Mammary epithelial cell (primary cell): ENCODE measurements at regions of chr1 and their contacts with region 1.

Region 1: DNA sequence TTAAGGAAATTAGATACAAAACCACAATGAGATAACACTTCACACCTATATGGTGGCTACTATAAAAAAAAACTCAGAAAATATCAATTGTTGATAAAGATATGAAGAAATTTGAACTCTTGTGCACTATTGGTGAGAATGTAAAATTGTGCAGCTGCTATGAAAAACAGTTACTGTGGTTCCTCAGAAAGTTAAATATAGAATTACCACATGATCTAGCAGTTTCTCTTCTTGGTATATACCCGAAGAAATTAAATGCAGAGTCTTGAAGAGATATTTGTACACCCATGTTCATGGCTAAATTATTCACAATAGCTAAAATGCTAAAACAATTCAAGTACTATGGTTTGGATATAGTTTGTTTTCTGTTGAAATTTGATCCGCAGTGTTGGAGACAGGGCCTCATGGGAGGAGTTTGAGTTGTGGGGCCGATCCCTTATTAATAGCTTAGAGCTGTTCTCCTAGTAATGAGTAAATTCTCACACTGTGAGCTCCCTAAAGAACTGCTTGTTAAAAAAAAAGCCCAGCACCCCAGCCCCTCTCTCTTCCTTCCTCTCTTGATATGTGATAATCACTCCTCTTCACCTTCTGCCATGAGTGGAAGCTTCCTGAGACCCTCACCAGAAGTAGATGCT is 1412.1 kb downstream of the PLA2G4A start:
- DNase-seq: no peak
- H3K4me3 ChIP-seq: no peak overlapping the region
- H3K27ac ChIP-seq: no peak overlapping the region
- H3K4me1 ChIP-seq: peaks cover 3% of the 10 kb centered on the region
- H3K27me3 ChIP-seq: no peaks in the 10 kb centered on the region
- CTCF ChIP-seq: no peak

Region 2: DNA sequence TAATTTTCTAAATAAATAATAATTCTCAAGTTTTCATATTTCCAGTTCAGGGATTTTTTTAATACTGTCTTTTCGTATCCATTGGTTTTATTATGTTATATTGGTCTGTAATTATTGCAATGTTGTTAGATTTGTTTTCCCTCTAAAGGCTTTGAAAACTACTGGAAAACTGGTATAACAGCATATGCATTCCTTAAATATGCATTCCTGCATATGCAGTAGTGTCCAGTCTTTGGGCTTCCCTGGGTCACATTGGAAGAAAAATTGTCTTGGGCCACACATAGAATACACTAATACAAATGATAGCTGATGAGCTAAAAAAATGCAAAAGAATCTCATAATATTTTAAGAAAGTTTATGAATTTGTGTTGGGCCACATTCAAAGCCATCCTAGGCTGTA is 160.2 kb before region 1 on chr1:
- CTCF ChIA-PET with region 1: no interaction called
- dilution Hi-C with region 1: no loop called
- in situ Hi-C with region 1: no loop called
- intact Hi-C with region 1: no loop called
- DNase-seq: no peak
- H3K4me3 ChIP-seq: no peak overlapping the region
- H3K27ac ChIP-seq: no peak overlapping the region
- H3K4me1 ChIP-seq: no peaks in the 10 kb centered on the region
- H3K27me3 ChIP-seq: no peaks in the 10 kb centered on the region
- CTCF ChIP-seq: no peak

Region 3: DNA sequence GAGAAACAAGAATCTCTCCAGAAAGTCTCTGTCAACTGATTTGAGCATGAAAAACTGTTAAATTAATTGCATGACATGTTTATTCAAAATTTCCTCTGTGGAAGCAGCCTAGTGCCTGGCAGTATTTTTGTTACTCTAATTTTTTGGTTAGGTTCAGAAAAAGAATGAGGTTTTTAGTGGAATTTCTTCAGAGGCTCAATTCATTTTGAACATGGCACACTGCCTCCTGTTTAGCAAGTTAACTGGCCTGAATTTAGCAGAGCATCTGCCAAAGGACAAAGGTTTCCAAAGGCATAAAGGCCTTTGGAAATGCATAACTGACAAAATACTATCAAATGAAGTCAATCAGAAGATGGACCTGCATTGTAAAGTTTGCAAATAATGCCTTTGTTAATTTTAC is 85.6 kb before region 1 on chr1:
- CTCF ChIA-PET with region 1: interaction called, 13 read pairs
- dilution Hi-C with region 1: no loop called
- in situ Hi-C with region 1: no loop called
- intact Hi-C with region 1: no loop called
- DNase-seq: no peak
- H3K4me3 ChIP-seq: no peak overlapping the region
- H3K27ac ChIP-seq: no peak overlapping the region
- H3K4me1 ChIP-seq: no peaks in the 10 kb centered on the region
- H3K27me3 ChIP-seq: peaks cover 1% of the 10 kb centered on the region
- CTCF ChIP-seq: no peak